ENCODE measurements at regions of chr2 and their contacts with region 1.

Region 1: GRCh38 chr2:131055169-131056065 is 37.8 kb downstream of the FAM168B start:
- DNase-seq: peak in 4 of 10 donors; percentile 68 to 93 (median 89)

Region 2: DNA sequence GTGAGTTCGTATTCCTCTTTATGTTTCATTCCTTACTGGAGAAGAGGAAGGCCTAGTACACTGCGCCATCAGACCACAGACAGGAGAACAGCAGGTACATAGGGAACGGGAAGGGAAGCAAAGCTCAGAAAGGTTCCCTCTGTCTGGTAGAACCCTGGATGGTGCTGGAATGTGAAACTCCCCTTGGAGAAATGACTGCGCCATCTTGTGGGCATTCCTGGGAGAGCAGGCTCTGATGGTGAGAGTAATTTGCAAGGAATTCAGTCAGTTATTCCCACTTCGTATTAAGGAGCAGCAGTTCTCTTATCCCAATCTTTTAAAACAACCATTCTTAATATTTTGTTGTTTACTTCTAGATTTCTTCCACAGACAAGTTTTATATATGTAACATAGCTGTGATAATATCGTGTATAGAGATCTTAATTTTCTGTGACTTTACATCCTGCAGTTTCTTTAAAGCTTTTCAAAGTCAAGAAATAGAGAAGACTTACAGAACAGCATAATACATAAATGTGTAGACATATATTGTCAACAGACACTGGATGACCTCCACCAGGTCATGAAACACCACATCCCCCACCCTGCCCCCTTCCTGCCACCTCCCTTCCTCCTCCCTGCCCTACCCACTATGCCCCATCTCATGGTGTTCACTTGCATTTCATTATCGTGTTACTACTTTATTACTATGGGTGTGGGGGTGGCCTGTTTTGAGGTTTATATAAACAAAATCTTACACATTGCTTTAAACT is 134.8 kb before region 1 on chr2:
- intact Hi-C with region 1: no loop called
- DNase-seq: peak; percentile 69 to 97 (median 90)

Region 3: GRCh38 chr2:131093006-131093695 is 37.7 kb after region 1 on chr2 and contains the start of gene FAM168B:
- intact Hi-C with region 1: loop called (anchors 5 kb)
- DNase-seq: peak; percentile 72 to 97 (median 79)